Mammary epithelial cell (primary cell): ENCODE measurements at regions of chr3 and their contacts with region 1.

Region 1: DNA sequence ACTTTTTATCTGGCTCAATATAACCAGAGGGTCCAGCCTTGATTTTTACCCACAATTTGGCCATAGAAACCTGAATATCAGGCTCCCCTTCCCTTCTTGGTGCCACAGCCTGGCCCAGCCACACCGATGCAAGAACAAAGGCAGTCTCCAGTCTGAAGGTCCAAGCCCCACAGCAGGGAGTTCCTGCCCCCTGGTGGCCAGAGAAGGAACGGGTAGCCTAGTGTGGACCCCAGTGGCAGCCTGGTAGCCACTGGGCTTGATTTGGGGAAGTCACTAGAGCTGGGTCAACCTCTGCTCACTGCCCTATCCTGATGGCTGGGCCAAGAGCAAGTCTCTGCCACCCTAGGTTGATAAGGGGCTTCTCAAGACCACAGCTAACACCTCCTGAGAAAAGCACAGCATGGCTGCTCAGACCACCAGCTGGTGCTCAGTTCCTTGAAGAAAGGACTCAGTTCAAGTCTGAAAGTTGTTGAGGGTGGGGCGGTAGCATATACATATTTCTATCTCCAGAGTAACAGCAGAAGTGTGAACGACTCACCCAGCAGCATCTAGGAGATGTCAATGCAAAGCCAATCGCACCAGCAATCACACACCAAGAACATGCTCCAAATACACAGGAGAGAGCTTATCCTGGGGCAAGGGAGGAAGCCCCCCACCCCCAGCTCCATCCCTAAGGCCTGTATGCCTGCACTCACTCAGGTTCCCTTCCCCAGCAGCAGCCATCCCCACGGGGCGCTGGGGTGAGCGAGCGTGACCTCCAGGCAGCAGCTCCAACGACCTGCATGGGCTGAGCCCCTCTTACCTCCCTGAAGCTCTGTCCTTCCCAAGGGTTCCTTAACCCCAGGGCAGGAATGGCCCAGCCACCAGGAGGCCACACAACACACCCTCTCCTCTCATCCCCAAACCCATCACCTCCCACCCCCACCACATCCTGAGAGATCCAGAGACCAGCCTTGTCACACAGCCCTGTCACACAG is 7.6 kb downstream of the PFKFB4 start:
- DNase-seq: peak; percentile 44
- H3K4me3 ChIP-seq: no peak overlapping the region
- H3K27ac ChIP-seq: no peak overlapping the region
- H3K4me1 ChIP-seq: peaks cover 1% of the 10 kb centered on the region
- H3K27me3 ChIP-seq: no peaks in the 10 kb centered on the region
- CTCF ChIP-seq: peak; percentile 94 to 95

Region 2: DNA sequence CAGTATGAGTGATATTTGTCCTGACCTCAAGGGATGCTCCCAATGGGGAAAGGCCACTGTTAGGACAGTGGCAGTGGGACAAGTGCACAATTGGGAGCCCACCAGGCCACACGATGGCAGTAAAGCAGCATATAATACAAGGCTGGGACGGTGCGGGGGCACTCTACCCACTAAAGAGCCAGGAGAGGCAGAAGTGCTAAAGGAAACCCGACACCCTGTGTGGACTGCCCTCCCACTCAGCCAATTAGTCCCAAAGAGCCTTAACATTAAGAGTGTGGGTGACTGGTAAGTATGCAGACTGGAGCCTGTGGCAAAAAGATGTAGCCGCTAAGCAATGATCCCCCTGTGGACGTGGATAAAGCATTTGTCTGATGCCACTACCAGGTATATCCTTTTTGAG is 316.3 kb before region 1 on chr3:
- CTCF ChIA-PET with region 1: no interaction called
- dilution Hi-C with region 1: no loop called
- in situ Hi-C with region 1: no loop called
- intact Hi-C with region 1: loop called (anchors 1 kb)
- DNase-seq: peak; percentile 60
- H3K4me3 ChIP-seq: peak overlapping the region in 1 of 3 experiments; percentile 4
- H3K27ac ChIP-seq: no peak overlapping the region
- H3K4me1 ChIP-seq: peaks cover 5% of the 10 kb centered on the region
- H3K27me3 ChIP-seq: no peaks in the 10 kb centered on the region
- CTCF ChIP-seq: peak; percentile 52 to 74

Region 3: DNA sequence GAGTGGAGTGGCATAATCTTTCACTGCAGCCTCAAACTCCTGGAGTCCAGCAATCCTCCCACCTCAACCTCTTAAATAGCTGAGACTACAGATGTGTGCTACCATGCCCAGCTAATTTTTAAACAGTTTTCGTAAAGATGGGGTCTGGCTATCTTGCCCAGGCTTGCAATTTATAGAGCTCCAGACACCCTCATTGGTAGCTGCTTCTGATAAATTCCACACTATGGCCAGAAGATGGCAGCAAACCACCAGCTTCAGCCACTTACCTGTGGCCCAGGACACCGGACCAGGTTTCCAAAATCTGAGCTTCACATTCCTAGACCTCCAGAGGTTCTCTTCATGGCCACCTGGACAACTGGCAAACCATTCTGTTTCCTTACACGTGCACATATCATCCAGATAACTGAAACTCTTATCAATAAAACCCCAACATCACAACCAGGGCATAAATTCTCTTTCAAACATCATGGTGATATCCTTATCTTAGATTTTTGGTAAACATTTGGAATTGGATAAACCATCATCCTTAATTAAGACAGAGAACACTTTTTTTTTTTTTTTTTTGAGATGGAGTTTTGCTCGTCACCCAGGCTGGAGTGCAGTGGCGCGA is 148.1 kb before region 1 on chr3:
- CTCF ChIA-PET with region 1: interaction called, 26 read pairs
- dilution Hi-C with region 1: no loop called
- in situ Hi-C with region 1: no loop called
- intact Hi-C with region 1: loop called (anchors 2 kb)
- DNase-seq: peak; percentile 62
- H3K4me3 ChIP-seq: no peak overlapping the region
- H3K27ac ChIP-seq: no peak overlapping the region
- H3K4me1 ChIP-seq: peaks cover 22% of the 10 kb centered on the region
- H3K27me3 ChIP-seq: no peaks in the 10 kb centered on the region
- CTCF ChIP-seq: peak; percentile 67 to 80

Region 4: DNA sequence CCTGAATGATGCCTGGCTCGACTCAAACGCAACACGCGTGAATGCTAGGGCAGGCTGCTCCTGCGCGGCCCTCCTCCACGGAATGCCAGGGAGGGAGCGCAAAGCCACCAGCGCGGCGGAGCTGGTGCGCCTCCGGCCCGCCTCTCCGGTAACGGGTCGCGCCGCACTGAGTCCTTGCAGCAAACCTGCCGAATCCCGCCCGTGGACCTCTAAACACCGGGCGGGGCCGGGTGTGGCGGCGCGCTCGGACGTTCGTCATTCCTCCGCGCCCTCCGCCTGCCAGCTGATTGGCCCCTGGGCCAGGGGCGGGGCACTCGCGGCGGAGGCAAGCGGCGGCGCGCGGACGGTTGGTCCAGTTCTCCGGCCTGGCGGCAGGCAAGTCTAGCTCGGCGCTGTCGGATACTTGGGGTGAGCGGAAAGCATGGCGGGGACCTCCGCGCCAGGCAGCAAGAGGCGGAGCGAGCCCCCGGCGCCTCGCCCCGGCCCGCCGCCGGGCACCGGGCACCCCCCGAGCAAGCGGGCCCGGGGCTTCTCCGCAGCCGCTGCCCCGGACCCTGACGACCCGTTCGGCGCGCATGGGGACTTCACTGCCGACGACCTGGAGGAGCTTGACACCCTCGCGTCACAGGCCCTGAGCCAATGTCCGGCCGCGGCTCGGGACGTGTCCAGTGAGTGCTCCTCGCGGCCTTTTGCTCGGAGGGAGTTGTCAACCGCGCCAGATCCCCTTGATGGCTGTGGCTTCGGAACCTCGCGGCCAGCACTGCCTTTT is 102.4 kb before region 1 on chr3 and contains the start of gene ATRIP:
- CTCF ChIA-PET with region 1: no interaction called
- dilution Hi-C with region 1: no loop called
- in situ Hi-C with region 1: loop called in 1 of 2 experiments (anchors 10 kb)
- intact Hi-C with region 1: loop called (anchors 2 kb)
- DNase-seq: peak; percentile 90
- H3K4me3 ChIP-seq: peak within 1 kb of the TSS; percentile 66 to 83 (median 74)
- H3K27ac ChIP-seq: peak within 1 kb of the TSS; percentile 70
- H3K4me1 ChIP-seq: peaks cover 20% of the 10 kb centered on the region
- H3K27me3 ChIP-seq: no peaks in the 10 kb centered on the region
- CTCF ChIP-seq: no peak
- total RNA-seq, gene ATRIP: 7.2 to 13.2 TPM

Region 5: DNA sequence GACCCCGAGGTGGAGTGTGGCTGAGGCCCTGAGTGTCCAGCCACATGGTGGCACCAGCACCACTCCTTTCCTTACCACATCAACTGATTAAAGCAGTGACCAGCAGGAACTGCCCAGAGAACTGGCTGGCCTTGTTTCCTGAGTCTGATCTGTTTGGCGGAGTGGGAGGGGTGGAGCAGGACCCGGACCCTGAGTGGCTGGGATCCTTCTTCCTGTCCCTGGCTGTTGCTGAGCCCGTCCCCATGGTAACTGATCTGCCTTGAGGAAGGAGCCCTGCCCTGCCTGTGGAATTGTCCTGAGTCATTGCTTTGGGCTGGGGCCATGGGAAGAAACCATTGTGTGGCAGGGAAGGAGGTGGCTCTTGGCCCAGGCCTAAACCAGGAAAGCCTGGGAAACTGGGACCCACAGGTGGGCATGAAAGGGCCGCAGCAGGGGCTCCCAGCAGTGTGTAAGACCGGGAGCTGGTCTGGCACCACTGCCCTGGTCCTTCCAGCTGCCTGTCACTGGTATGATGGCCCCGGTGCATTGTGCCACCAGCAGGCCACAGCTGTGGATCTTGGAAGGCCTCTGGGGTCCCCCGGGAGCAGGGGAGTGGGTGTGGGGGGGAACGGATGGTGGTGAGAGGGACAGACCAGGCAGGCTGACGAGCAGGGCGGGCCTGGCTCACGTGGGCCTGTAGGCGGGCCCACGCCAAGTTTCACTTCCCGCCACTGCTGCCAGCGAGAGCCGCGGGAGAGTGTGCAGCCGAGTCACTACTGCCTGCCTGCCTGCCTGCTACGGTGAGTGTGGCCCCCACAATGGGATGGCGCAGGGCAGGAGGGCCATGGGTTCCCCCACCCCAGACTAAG is 83.3 kb before region 1 on chr3:
- CTCF ChIA-PET with region 1: no interaction called
- dilution Hi-C with region 1: loop called (anchors 5 kb)
- in situ Hi-C with region 1: no loop called
- intact Hi-C with region 1: loop called (anchors 1 kb)
- DNase-seq: peak; percentile 100
- H3K4me3 ChIP-seq: peak overlapping the region; percentile 26 to 55 (median 50)
- H3K27ac ChIP-seq: peak overlapping the region; percentile 99
- H3K4me1 ChIP-seq: peaks cover 33% of the 10 kb centered on the region
- H3K27me3 ChIP-seq: no peaks in the 10 kb centered on the region
- CTCF ChIP-seq: peak; percentile 45 to 81

Region 6: GRCh38 chr3:48507351-48508061 is 41.5 kb before region 1 on chr3:
- CTCF ChIA-PET with region 1: no interaction called
- dilution Hi-C with region 1: loop called (anchors 5 kb)
- in situ Hi-C with region 1: no loop called
- intact Hi-C with region 1: loop called (anchors 2 kb)
- DNase-seq: peak; percentile 92
- H3K4me3 ChIP-seq: no peak overlapping the region
- H3K27ac ChIP-seq: peak overlapping the region; percentile 58
- H3K4me1 ChIP-seq: peaks cover 39% of the 10 kb centered on the region
- H3K27me3 ChIP-seq: no peaks in the 10 kb centered on the region
- CTCF ChIP-seq: peak; percentile 56 to 69

Region 7: GRCh38 chr3:48581621-48582481 is 32.8 kb after region 1 on chr3:
- CTCF ChIA-PET with region 1: no interaction called
- dilution Hi-C with region 1: no loop called
- in situ Hi-C with region 1: no loop called
- intact Hi-C with region 1: no loop called
- DNase-seq: no peak
- H3K4me3 ChIP-seq: no peak overlapping the region
- H3K27ac ChIP-seq: no peak overlapping the region
- H3K4me1 ChIP-seq: no peaks in the 10 kb centered on the region
- H3K27me3 ChIP-seq: no peaks in the 10 kb centered on the region
- CTCF ChIP-seq: no peak

Region 8: GRCh38 chr3:48885753-48886152 is 336.7 kb after region 1 on chr3:
- CTCF ChIA-PET with region 1: no interaction called
- dilution Hi-C with region 1: no loop called
- in situ Hi-C with region 1: no loop called
- intact Hi-C with region 1: no loop called
- DNase-seq: no peak
- H3K4me3 ChIP-seq: no peak overlapping the region
- H3K27ac ChIP-seq: no peak overlapping the region
- H3K4me1 ChIP-seq: no peaks in the 10 kb centered on the region
- H3K27me3 ChIP-seq: no peaks in the 10 kb centered on the region
- CTCF ChIP-seq: no peak